B cell (primary cell): ENCODE measurements at regions of chr12 and their contacts with region 1.

Region 1: DNA sequence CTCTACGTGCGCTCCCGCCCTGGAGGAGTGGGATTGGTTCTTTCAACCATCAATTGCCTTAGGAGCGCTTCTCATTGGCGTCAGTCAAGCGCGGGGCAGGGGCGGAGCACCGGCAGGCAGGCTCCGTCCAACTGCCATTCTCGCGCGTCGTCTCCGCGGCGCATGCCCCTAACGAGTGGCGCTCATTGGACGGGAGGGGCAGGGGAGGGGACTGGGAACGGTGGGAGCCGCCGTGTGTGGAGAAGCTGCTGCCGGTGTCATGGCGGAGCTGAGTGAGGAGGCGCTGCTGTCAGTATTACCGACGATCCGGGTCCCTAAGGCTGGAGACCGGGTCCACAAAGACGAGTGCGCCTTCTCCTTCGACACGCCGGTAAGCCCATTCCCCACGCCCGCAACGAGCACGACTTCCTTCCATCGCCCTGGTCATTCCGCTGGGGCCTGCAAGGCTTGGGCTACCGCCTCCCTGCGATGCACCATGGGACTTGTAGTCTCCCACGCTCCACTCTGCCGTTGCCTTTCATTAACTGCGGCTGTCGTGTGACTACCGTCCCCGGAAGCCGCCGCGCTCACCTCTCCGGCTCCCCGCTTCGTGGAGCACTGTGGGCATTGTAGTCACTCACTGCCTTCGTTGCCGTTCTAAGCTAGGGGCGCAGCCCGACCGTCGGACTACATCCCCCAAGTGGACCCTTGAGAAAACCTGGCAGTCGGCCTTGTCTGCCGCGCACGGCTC is at the start of gene USP5:
- DNase-seq: peak; percentile 100
- ATAC-seq: peak; percentile 76
- H3K4me3 ChIP-seq: peak within 1 kb of the TSS; percentile 85 to 98 (median 92)
- H3K4me3 Mint-ChIP-seq: peak within 1 kb of the TSS; percentile 92
- H3K27ac ChIP-seq: peak within 1 kb of the TSS; percentile 91
- H3K27ac Mint-ChIP-seq: peak within 1 kb of the TSS; percentile 93
- H3K4me1 ChIP-seq: peaks cover 6 to 23% of the 10 kb centered on the region in 2 donors
- H3K4me1 Mint-ChIP-seq: peaks cover 23% of the 10 kb centered on the region
- H3K27me3 ChIP-seq: no peaks in the 10 kb centered on the region
- H3K27me3 Mint-ChIP-seq: no peaks in the 10 kb centered on the region
- CTCF ChIP-seq: no peak
- total RNA-seq, gene USP5: 56.8 and 59.7 TPM in 2 replicates

Region 2: DNA sequence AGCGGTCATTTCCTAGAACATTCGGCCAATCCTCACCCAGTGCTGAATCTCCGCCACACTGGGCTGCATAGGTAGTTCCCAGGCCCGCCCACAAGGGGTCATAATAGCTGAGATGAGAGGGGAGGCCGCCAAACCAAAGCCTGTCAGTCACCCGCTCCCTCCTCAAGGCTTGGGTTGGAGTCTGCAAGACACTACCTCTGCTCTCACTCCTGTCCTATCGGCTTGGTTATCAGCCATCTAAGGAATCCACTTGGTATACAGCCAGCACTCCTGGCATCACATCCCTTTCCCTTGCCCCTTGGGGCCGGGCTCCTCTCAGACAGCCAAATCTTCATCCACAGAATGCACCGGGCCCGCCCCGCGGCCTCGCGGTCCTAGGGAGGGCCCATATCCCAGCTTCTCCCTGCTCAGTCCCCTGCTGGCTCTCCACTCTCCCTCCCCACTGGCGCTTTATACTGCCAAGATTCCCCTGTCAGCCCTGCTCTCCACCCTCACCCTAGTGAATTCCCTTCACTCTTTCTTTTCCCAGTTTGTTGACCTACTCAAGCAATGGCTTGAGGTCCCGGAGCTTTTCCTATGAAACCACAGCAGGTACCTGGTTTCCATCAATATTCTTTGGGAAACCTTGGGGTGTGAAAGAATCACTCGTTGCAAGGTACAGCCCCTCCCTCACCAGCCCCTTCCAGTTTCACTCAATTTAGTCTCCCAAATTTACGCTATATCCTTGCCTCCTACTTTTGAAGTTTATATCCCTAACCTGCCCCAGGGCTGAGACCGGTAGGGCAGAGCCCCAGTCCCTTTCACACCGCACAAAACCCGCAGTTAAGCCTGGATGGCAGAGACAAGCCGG is 297.7 kb before region 1 on chr12:
- CTCF ChIA-PET with region 1: no interaction called
- POLR2A ChIA-PET with region 1: no interaction called
- intact Hi-C with region 1: loop called (anchors 5 kb)
- DNase-seq: peak; percentile 82
- ATAC-seq: peak; percentile 70
- H3K4me3 ChIP-seq: peak overlapping the region in 4 of 5 experiments; percentile 52 to 93 (median 84)
- H3K4me3 Mint-ChIP-seq: peak overlapping the region; percentile 89
- H3K27ac ChIP-seq: no peak overlapping the region
- H3K27ac Mint-ChIP-seq: peak overlapping the region; percentile 67
- H3K4me1 ChIP-seq: peaks cover 12 to 38% of the 10 kb centered on the region in 2 donors
- H3K4me1 Mint-ChIP-seq: peaks cover 36% of the 10 kb centered on the region
- H3K27me3 ChIP-seq: no peaks in the 10 kb centered on the region
- H3K27me3 Mint-ChIP-seq: no peaks in the 10 kb centered on the region
- CTCF ChIP-seq: peak; percentile 81

Region 3: GRCh38 chr12:6723607-6724396 is 128.3 kb before region 1 on chr12 and contains the start of gene COPS7A:
- CTCF ChIA-PET with region 1: interaction called, 5 read pairs
- POLR2A ChIA-PET with region 1: interaction called, 8 read pairs
- intact Hi-C with region 1: loop called (anchors 1 kb)
- DNase-seq: peak; percentile 98
- ATAC-seq: peak; percentile 89
- H3K4me3 ChIP-seq: peak within 1 kb of the TSS; percentile 53 to 65 (median 63)
- H3K4me3 Mint-ChIP-seq: peak within 1 kb of the TSS; percentile 91
- H3K27ac ChIP-seq: peak within 1 kb of the TSS; percentile 81 to 86
- H3K27ac Mint-ChIP-seq: peak within 1 kb of the TSS; percentile 94
- H3K4me1 ChIP-seq: peaks cover 13 to 17% of the 10 kb centered on the region in 2 donors
- H3K4me1 Mint-ChIP-seq: peaks cover 19% of the 10 kb centered on the region
- H3K27me3 ChIP-seq: no peaks in the 10 kb centered on the region
- H3K27me3 Mint-ChIP-seq: no peaks in the 10 kb centered on the region
- CTCF ChIP-seq: no peak
- total RNA-seq, gene COPS7A: 28.3 and 29.4 TPM in 2 replicates

Region 4: GRCh38 chr12:6834873-6835272 is 17.2 kb before region 1 on chr12:
- CTCF ChIA-PET with region 1: interaction called, 11 read pairs
- POLR2A ChIA-PET with region 1: interaction called, 4 read pairs
- intact Hi-C with region 1: loop called (anchors 1 kb)
- DNase-seq: no peak
- ATAC-seq: no peak
- H3K4me3 ChIP-seq: no peak overlapping the region
- H3K4me3 Mint-ChIP-seq: no peak overlapping the region
- H3K27ac ChIP-seq: no peak overlapping the region
- H3K27ac Mint-ChIP-seq: no peak overlapping the region
- H3K4me1 ChIP-seq: peaks cover 0 to 17% of the 10 kb centered on the region in 2 donors
- H3K4me1 Mint-ChIP-seq: peaks cover 12% of the 10 kb centered on the region
- H3K27me3 ChIP-seq: peaks cover 0 to 24% (median 4%) of the 10 kb centered on the region in 4 experiments
- H3K27me3 Mint-ChIP-seq: peaks cover 29% of the 10 kb centered on the region
- CTCF ChIP-seq: no peak

Region 5: DNA sequence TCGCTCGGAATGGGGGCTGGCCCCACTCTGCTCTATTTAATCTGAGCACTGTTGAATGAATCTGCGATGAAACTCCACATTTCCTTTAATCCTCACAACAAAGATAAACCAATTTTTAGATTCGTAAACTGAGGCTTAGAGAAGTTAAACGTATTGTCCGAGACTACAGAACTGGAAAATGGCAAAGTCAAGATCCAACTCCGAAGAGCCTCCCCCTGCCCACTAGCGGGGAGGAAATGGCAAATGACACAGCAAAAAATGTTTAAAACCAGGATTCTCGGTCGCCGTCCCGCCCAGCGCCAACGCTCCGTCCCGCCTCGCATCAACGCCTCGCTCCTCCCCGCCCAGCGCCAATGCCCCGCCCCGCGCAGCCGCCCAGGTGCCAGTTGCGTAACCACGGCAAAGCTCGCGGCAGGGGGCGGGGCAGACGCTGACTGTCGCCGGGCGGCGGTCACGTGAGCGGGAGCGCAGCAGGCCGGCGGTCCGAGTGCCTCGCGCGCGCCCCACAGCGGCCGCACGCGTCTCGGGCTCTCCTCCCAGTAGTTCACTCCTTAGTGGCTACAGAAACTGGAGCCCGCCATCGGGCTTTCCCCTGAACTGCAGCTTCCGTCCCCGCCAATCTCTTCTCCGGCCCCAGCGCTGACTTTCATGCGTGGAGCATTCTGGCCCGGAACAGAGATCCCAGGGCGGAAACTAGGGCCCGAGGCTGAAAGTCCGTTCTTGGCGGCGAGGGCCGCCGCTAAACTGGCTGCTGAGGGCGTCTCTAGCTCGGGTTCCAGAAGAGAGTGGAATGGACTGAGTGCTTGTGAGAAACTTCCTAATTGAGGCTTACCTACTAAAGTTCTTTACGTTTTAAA is 38.9 kb after region 1 on chr12:
- CTCF ChIA-PET with region 1: interaction called, 7 read pairs
- POLR2A ChIA-PET with region 1: interaction called, 7 read pairs
- intact Hi-C with region 1: loop called (anchors 1 kb)
- DNase-seq: peak; percentile 98
- ATAC-seq: peak; percentile 95
- H3K4me3 ChIP-seq: peak overlapping the region; percentile 61 to 79 (median 76)
- H3K4me3 Mint-ChIP-seq: peak overlapping the region; percentile 87
- H3K27ac ChIP-seq: peak overlapping the region; percentile 93 to 94
- H3K27ac Mint-ChIP-seq: peak overlapping the region; percentile 91
- H3K4me1 ChIP-seq: peaks cover 9 to 13% of the 10 kb centered on the region in 2 donors
- H3K4me1 Mint-ChIP-seq: peaks cover 15% of the 10 kb centered on the region
- H3K27me3 ChIP-seq: no peaks in the 10 kb centered on the region
- H3K27me3 Mint-ChIP-seq: no peaks in the 10 kb centered on the region
- CTCF ChIP-seq: peak; percentile 90

Region 6: GRCh38 chr12:6937481-6938297 is 85.6 kb after region 1 on chr12:
- CTCF ChIA-PET with region 1: interaction called, 3 read pairs
- POLR2A ChIA-PET with region 1: interaction called, 9 read pairs
- intact Hi-C with region 1: loop called (anchors 5 kb)
- DNase-seq: peak; percentile 98
- ATAC-seq: peak; percentile 91
- H3K4me3 ChIP-seq: peak overlapping the region; percentile 28 to 94 (median 80)
- H3K4me3 Mint-ChIP-seq: peak overlapping the region; percentile 87
- H3K27ac ChIP-seq: peak overlapping the region; percentile 88 to 91
- H3K27ac Mint-ChIP-seq: peak overlapping the region; percentile 97
- H3K4me1 ChIP-seq: peaks cover 17 to 31% of the 10 kb centered on the region in 2 donors
- H3K4me1 Mint-ChIP-seq: peaks cover 37% of the 10 kb centered on the region
- H3K27me3 ChIP-seq: no peaks in the 10 kb centered on the region
- H3K27me3 Mint-ChIP-seq: no peaks in the 10 kb centered on the region
- CTCF ChIP-seq: peak; percentile 92